Heart right ventricle (tissue), 16 donors: ENCODE measurements at regions of chr19 and their contacts with region 1.

Region 1: GRCh38 chr19:18349524-18350128 is 9.2 kb downstream of the PGPEP1 start:
- DNase-seq: peak; percentile 48
- ATAC-seq: peak in 6 of 8 donors; percentile 53 to 71 (median 64)
- H3K4me3 ChIP-seq: no peak overlapping the region
- H3K27ac ChIP-seq: no peak overlapping the region
- H3K4me1 ChIP-seq: no peaks in the 10 kb centered on the region
- H3K27me3 ChIP-seq: no peaks in the 10 kb centered on the region
- CTCF ChIP-seq: peak; percentile 50 to 86 (median 76)

Region 2: GRCh38 chr19:18408053-18408476 is 58.4 kb after region 1 on chr19:
- intact Hi-C with region 1: loop called (anchors 1 to 5 kb)
- DNase-seq: peak; percentile 8 to 58
- ATAC-seq: peak in 2 of 8 donors; percentile 24 to 46
- H3K4me3 ChIP-seq: no peak overlapping the region
- H3K27ac ChIP-seq: no peak overlapping the region
- H3K4me1 ChIP-seq: peaks cover 0 to 9% (median 0%) of the 10 kb centered on the region in 9 donors
- H3K27me3 ChIP-seq: no peaks in the 10 kb centered on the region
- CTCF ChIP-seq: peak in 7 of 9 donors; percentile 29 to 61 (median 46)

Region 3: GRCh38 chr19:18419195-18419698 is 69.6 kb after region 1 on chr19 and contains the start of gene SSBP4:
- intact Hi-C with region 1: loop called in 4 of 10 experiments (anchors 5 kb)
- DNase-seq: peak; percentile 69 to 82
- ATAC-seq: peak in 6 of 8 donors; percentile 0 to 30 (median 7)
- H3K4me3 ChIP-seq: peak within 1 kb of the TSS; percentile 45 to 82 (median 76)
- H3K27ac ChIP-seq: peak within 1 kb of the TSS; percentile 78 to 99 (median 96)
- H3K4me1 ChIP-seq: peaks cover 33 to 93% (median 84%) of the 10 kb centered on the region in 9 donors
- H3K27me3 ChIP-seq: peaks cover 0 to 15% (median 0%) of the 10 kb centered on the region in 7 donors
- CTCF ChIP-seq: peak in 8 of 9 donors; percentile 5 to 66 (median 36)
- total RNA-seq, gene SSBP4: 17.6 to 47.1 (median 27.3) TPM